Activated CD8-positive, alpha-beta T cell treated with anti-CD3 and anti-CD28 coated beads, Interleukin-2, amount 10 ng/mL, durations not matched to agents 7 days and 5 days (primary cell): ENCODE measurements at regions of chr15 and their contacts with region 1.

Region 1: GRCh38 chr15:42608110-42608531 is 32.7 kb downstream of the STARD9 start:
- DNase-seq: peak; percentile 92
- ATAC-seq: peak; percentile 83
- H3K4me3 Mint-ChIP-seq: peak overlapping the region; percentile 41
- H3K27ac Mint-ChIP-seq: peak overlapping the region; percentile 84
- H3K4me1 Mint-ChIP-seq: peaks cover 64% of the 10 kb centered on the region
- H3K27me3 Mint-ChIP-seq: no peaks in the 10 kb centered on the region

Region 2: DNA sequence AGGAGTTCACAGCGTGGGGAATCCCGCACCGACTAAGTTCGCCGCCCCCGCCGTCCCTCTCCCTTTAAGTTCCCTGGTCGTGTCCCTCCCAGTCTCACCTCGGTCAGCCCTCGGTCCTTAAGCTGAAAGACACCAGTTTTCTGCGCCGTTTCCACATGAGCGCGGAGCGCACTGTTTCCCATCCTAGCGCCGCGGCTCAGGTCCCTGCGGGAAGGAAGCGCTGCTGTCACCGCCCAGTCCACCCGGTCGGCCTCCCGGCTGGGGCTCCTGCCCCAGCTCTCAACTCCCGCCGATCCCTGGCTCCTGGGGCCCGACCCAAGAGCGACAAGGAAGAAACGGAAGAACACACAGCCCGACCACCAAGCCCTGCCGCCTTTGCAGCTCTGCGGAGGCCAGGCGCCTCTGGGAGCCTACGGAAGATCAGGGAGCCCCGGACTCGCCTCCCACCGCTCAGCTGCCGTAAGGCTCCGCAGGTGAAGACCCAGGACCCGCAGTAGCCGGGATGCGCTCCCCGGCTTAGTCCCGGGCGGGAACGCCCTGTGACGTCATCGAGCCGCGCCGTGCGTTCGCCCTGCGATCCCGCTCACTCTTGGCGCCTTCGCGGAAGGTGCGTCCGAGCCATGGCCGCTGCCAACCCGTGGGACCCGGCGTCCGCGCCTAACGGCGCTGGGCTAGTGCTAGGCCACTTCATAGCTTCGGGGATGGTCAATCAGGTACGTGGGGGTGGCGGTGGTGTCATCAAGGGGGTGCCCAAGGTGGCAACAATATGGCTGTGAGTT is 59.7 kb before region 1 on chr15 and contains the starts of genes HAUS2 and LRRC57:
- CTCF ChIA-PET with region 1: no interaction called
- POLR2A ChIA-PET with region 1: interaction called, 11 read pairs
- DNase-seq: peak; percentile 88
- ATAC-seq: peak; percentile 95
- H3K4me3 Mint-ChIP-seq: peak within 1 kb of the TSS; percentile 89
- H3K27ac Mint-ChIP-seq: peak within 1 kb of the TSS; percentile 93
- H3K4me1 Mint-ChIP-seq: peaks cover 53% of the 10 kb centered on the region
- H3K27me3 Mint-ChIP-seq: no peaks in the 10 kb centered on the region
- total RNA-seq, gene HAUS2: 42.2 to 44.7 TPM
- total RNA-seq, gene LRRC57: 28.2 to 30.4 TPM

Region 3: DNA sequence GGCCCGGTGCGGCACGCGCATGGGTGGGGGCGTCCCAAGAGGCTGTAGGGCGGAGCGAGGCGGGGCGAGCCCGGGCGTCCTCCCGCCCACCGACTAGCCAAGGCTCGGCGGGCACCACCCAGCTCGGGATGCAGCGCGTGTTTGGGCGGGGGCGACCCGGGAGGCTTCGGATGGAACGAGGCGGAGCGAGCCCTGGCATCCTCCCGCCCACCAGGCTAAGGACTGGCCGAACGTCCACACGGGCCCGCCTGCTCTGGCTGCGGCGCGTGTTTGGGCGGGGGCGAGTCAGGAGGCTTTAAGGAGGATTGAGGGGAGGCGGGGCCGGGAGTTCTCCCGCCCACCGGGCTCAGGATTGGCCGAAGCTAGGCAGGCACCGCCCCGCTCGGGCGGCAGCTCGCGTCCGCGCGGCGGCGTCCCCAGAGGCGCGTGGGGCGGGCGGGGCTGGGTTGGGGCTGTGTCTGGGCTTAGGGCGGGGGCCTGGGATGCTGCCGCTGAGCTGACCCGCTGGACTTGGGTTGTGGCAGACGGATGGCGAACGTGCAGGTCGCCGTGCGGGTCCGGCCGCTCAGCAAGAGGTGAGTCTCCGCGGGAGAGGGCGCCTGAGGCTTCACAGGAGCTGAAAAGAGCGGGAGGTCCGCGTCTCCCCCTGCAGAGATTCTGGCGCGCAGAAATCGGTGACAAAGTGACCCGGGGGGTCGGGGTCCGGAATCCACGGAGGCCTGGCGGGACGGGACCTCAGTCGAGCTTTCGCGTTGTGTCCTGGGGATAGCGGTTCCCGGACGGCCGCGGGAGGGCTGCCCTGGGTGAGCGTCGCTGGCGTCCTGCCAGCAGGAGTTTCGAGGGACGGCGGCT is 32.7 kb before region 1 on chr15 and contains the start of gene STARD9:
- CTCF ChIA-PET with region 1: interaction called, 18 read pairs
- POLR2A ChIA-PET with region 1: interaction called, 12 read pairs
- DNase-seq: peak; percentile 97
- ATAC-seq: peak; percentile 94
- H3K4me3 Mint-ChIP-seq: peak within 1 kb of the TSS; percentile 95
- H3K27ac Mint-ChIP-seq: peak within 1 kb of the TSS; percentile 91
- H3K4me1 Mint-ChIP-seq: peaks cover 35% of the 10 kb centered on the region
- H3K27me3 Mint-ChIP-seq: peaks cover 13% of the 10 kb centered on the region
- total RNA-seq, gene STARD9: 12.8 to 13.0 TPM

Region 4: DNA sequence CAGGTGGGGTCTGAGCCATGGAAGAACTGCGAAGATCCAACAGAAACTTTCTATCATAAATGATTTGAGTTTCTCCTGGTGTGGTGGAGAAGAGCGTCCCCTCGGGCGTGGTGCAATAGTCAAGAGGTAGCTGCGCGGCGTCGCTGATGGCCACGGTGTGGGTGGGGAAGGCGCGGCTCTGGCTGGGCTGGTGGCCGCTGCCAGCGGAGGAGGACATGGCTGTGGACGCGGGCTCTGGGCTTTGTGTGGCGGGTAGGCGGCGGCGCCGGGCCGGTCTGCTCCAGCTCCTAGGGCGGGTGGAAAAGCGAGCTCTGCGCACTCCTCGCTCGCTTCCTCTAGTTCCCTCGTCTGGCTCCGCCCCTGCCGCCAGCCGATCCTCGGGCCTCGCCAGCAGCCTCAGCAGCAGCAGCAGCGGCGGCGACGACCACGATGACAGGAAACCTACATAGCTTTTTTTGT is 26.8 kb before region 1 on chr15:
- CTCF ChIA-PET with region 1: interaction called, 18 read pairs
- POLR2A ChIA-PET with region 1: interaction called, 18 read pairs
- DNase-seq: peak; percentile 89
- ATAC-seq: peak; percentile 100
- H3K4me3 Mint-ChIP-seq: peak overlapping the region; percentile 70
- H3K27ac Mint-ChIP-seq: peak overlapping the region; percentile 74
- H3K4me1 Mint-ChIP-seq: peaks cover 54% of the 10 kb centered on the region
- H3K27me3 Mint-ChIP-seq: peaks cover 13% of the 10 kb centered on the region